Naive thymus-derived CD4-positive, alpha-beta T cell (primary cell): ENCODE measurements at regions of chr17 and their contacts with region 1.

Region 1: GRCh38 chr17:75784473-75785015 is at the start of gene UNK:
- DNase-seq: peak; percentile 86 to 98 (median 96)
- ATAC-seq: peak; percentile 80
- H3K4me3 ChIP-seq: peak within 1 kb of the TSS; percentile 94
- H3K4me3 Mint-ChIP-seq: peak within 1 kb of the TSS; percentile 84 to 98 (median 92)
- H3K27ac ChIP-seq: peak within 1 kb of the TSS; percentile 99
- H3K27ac Mint-ChIP-seq: peak within 1 kb of the TSS; percentile 99 to 100 (median 100)
- H3K4me1 ChIP-seq: peaks cover 31 to 33% of the 10 kb centered on the region in 2 donors
- H3K4me1 Mint-ChIP-seq: peaks cover 23 to 60% (median 51%) of the 10 kb centered on the region in 7 donors
- H3K27me3 ChIP-seq: no peaks in the 10 kb centered on the region
- H3K27me3 Mint-ChIP-seq: peaks cover 0 to 2% (median 0%) of the 10 kb centered on the region in 5 donors
- total RNA-seq, gene UNK: 32.0 to 49.8 (median 41.0) TPM

Region 2: DNA sequence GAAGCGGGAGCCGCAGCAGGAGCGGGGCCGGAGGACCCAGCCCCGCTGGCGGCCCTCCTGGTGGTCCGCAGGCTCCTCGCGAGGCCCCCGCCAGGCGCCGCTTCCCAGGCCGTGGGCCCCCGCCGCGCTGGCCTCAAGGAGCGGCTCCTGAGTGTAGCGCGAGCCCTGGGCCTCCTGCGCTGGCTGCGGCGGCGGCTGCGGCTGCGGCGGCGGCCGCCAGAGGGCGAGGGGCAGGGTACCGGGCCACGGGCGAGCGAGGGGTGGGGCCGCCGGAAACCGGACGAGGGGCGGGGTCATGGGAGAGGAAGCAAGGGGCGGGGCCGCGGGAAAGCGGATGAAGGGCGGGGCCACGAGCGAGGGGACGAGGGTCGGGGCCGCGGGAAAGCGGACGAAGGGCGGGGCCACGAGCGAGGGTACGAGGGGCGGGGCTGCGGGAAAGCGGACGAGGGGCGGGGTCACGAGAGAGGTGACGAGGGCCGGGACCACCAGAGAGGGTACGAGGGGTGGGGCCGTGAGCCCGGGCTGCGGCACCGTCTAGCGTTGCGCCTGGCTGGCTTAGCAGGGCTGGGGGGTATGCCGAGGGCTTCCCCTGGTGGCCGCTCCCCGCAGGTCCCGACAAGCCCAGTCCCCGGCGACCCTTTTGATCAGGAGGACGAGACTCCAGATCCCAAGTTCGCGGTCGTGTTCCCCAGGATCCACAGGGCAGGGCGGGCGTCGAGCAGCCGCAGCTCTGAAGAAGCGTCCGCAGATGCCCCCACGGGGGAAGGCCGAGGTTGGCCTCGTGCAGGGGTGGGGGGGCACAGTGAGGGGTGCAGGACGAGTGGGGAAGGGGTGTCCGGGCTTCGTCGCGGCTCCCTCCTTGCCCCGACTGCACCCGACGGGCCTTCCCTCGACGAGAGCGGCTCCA is 195.3 kb before region 1 on chr17:
- CTCF ChIA-PET with region 1: no interaction called
- POLR2A ChIA-PET with region 1: interaction called, 3 read pairs
- intact Hi-C with region 1: loop called in 1 of 2 experiments (anchors 1 kb)
- DNase-seq: peak; percentile 81 to 98 (median 93)
- ATAC-seq: peak; percentile 94
- H3K4me3 ChIP-seq: peak overlapping the region; percentile 53
- H3K4me3 Mint-ChIP-seq: peak overlapping the region; percentile 57 to 95 (median 82)
- H3K27ac ChIP-seq: peak overlapping the region; percentile 83
- H3K27ac Mint-ChIP-seq: peak overlapping the region in 6 of 9 donors; percentile 59 to 95 (median 86)
- H3K4me1 ChIP-seq: peaks cover 0 to 2% of the 10 kb centered on the region in 2 donors
- H3K4me1 Mint-ChIP-seq: peaks cover 0 to 17% (median 11%) of the 10 kb centered on the region in 7 donors
- H3K27me3 ChIP-seq: no peaks in the 10 kb centered on the region
- H3K27me3 Mint-ChIP-seq: peaks cover 0 to 31% (median 0%) of the 10 kb centered on the region in 5 donors

Region 3: GRCh38 chr17:75803883-75804282 is 19.3 kb after region 1 on chr17:
- CTCF ChIA-PET with region 1: interaction called, 3 read pairs
- POLR2A ChIA-PET with region 1: interaction called, 10 read pairs
- intact Hi-C with region 1: no loop called
- DNase-seq: no peak
- ATAC-seq: no peak
- H3K4me3 ChIP-seq: no peak overlapping the region
- H3K4me3 Mint-ChIP-seq: no peak overlapping the region
- H3K27ac ChIP-seq: no peak overlapping the region
- H3K27ac Mint-ChIP-seq: peak overlapping the region in 1 of 9 donors; percentile 58
- H3K4me1 ChIP-seq: no peaks in the 10 kb centered on the region
- H3K4me1 Mint-ChIP-seq: peaks cover 8 to 17% (median 11%) of the 10 kb centered on the region in 7 donors
- H3K27me3 ChIP-seq: no peaks in the 10 kb centered on the region
- H3K27me3 Mint-ChIP-seq: no peaks in the 10 kb centered on the region

Region 4: GRCh38 chr17:75845049-75845860 is 60.7 kb after region 1 on chr17:
- CTCF ChIA-PET with region 1: interaction called, 4 read pairs
- POLR2A ChIA-PET with region 1: interaction called, 238 read pairs
- intact Hi-C with region 1: loop called (anchors 1 to 5 kb)
- DNase-seq: peak in 7 of 9 donors; percentile 41 to 67 (median 46)
- ATAC-seq: peak; percentile 68
- H3K4me3 ChIP-seq: no peak overlapping the region
- H3K4me3 Mint-ChIP-seq: peak overlapping the region in 9 of 10 donors; percentile 34 to 93 (median 53)
- H3K27ac ChIP-seq: peak overlapping the region; percentile 97
- H3K27ac Mint-ChIP-seq: peak overlapping the region in 8 of 9 donors; percentile 28 to 98 (median 66)
- H3K4me1 ChIP-seq: peaks cover 21 to 30% of the 10 kb centered on the region in 2 donors
- H3K4me1 Mint-ChIP-seq: peaks cover 4 to 36% (median 19%) of the 10 kb centered on the region in 7 donors
- H3K27me3 ChIP-seq: no peaks in the 10 kb centered on the region
- H3K27me3 Mint-ChIP-seq: no peaks in the 10 kb centered on the region

Region 5: GRCh38 chr17:75904749-75905521 is 120.4 kb after region 1 on chr17 and contains the start of gene MRPL38:
- CTCF ChIA-PET with region 1: no interaction called
- POLR2A ChIA-PET with region 1: interaction called, 7 read pairs
- intact Hi-C with region 1: loop called (anchors 1 to 2 kb)
- DNase-seq: peak; percentile 88 to 97 (median 91)
- ATAC-seq: peak; percentile 99
- H3K4me3 ChIP-seq: peak within 1 kb of the TSS; percentile 72
- H3K4me3 Mint-ChIP-seq: peak within 1 kb of the TSS; percentile 83 to 97 (median 92)
- H3K27ac ChIP-seq: peak within 1 kb of the TSS; percentile 85
- H3K27ac Mint-ChIP-seq: peak within 1 kb of the TSS; percentile 90 to 97 (median 95)
- H3K4me1 ChIP-seq: peaks cover 0 to 5% of the 10 kb centered on the region in 2 donors
- H3K4me1 Mint-ChIP-seq: peaks cover 2 to 16% (median 14%) of the 10 kb centered on the region in 7 donors
- H3K27me3 ChIP-seq: no peaks in the 10 kb centered on the region
- H3K27me3 Mint-ChIP-seq: no peaks in the 10 kb centered on the region
- total RNA-seq, gene MRPL38: 81.0 to 154 (median 128) TPM

Region 6: GRCh38 chr17:76501018-76501826 is 716.7 kb after region 1 on chr17 and contains the start of gene RHBDF2:
- CTCF ChIA-PET with region 1: no interaction called
- POLR2A ChIA-PET with region 1: interaction called, 3 read pairs
- intact Hi-C with region 1: loop called in 1 of 2 experiments (anchors 10 kb)
- DNase-seq: peak; percentile 90 to 100 (median 95)
- ATAC-seq: peak; percentile 99
- H3K4me3 ChIP-seq: peak within 1 kb of the TSS; percentile 62
- H3K4me3 Mint-ChIP-seq: peak within 1 kb of the TSS; percentile 82 to 91 (median 86)
- H3K27ac ChIP-seq: peak within 1 kb of the TSS; percentile 73
- H3K27ac Mint-ChIP-seq: peak within 1 kb of the TSS; percentile 95 to 99 (median 97)
- H3K4me1 ChIP-seq: peaks cover 22 to 44% of the 10 kb centered on the region in 2 donors
- H3K4me1 Mint-ChIP-seq: peaks cover 17 to 61% (median 35%) of the 10 kb centered on the region in 7 donors
- H3K27me3 ChIP-seq: no peaks in the 10 kb centered on the region
- H3K27me3 Mint-ChIP-seq: no peaks in the 10 kb centered on the region
- total RNA-seq, gene RHBDF2: 31.1 to 119 (median 35.4) TPM